Activated naive CD4-positive, alpha-beta T cell treated with anti-CD3 and anti-CD28 coated beads for 36 hours (primary cell): ENCODE measurements at regions of chrX and their contacts with region 1.

Region 1: DNA sequence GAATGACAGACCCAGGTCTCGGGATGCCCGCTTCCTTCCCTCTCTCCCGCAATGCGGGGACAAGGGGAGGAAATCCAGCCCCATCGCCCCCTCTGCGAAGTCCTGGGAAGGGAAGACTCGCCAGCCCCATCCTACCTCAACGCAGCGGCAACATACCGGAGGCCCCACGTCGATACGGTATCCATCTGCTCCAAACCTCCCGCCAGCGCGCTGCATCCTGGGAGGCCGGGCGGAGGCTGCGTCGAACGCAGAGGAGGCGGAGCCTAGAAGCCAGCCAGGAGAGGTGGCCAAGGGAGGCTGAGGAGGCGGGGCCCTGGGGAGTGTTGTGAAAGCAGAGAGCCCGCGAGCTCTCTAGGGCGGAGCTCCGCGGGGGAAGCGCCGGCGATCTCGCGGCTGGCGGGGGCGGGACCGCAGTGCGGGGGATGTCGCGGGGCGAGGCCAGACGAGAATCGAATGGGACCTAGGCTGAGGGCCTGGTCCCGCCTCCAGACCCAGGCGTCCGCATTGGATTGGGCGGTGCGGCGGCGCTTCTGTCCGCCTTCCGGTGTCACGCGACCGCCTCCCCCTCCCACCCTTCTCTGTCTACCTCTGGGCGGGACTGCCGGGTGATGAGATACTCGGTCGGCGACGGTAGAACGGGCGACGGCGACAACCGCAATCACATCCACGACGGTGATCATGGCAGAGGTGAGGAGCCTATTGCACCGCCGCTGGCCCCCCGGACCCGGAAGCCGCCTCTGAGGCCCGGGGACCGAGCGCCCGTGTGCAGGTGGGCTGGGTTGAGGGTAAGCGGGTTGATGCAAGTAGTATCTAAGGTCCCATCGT is at the starts of genes FANCB and MOSPD2:
- DNase-seq: peak; percentile 95
- H3K4me3 Mint-ChIP-seq: peak within 1 kb of the TSS; percentile 77
- H3K27ac Mint-ChIP-seq: peak within 1 kb of the TSS; percentile 75
- H3K4me1 Mint-ChIP-seq: peaks cover 26% of the 10 kb centered on the region
- H3K27me3 Mint-ChIP-seq: no peaks in the 10 kb centered on the region
- total RNA-seq, gene FANCB: 16.5 to 17.9 TPM
- total RNA-seq, gene MOSPD2: 16.0 to 16.1 TPM

Region 2: DNA sequence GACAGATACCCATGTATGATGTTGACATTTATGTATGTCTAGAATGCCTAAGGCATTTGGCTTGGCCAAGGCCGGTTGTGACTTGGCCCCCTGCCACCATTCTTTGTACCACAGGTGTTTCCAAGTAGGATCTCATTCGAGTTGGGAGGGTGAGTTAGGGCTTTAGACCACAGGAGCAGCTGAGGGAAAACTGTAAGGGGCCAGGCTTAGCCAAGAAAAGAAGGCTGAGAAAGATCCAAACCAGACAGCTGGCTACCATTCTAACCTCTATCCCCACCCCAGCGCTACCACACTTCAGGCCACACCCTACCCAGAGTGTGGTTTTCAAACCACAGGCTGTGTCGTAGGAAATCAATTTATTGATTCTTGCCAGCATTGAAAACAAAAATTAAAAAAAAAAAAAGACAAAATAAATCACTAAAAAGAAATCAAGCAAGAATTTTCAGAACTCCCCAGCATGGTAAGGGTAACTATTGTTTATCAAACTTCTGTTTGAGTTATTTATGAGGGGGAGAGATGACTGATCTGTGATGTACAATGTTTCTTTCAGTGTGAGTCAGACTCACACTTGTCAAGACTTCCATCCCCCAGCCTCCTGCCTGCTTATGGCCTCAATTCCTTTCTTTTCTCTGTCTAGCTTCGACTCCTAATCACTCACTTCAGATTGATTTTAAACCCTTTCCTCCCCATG is 1888.3 kb before region 1 on chrX:
- CTCF ChIA-PET with region 1: no interaction called
- intact Hi-C with region 1: loop called (anchors 10 kb)
- DNase-seq: peak; percentile 54
- H3K4me3 Mint-ChIP-seq: peak overlapping the region; percentile 54
- H3K27ac Mint-ChIP-seq: peak overlapping the region; percentile 95
- H3K4me1 Mint-ChIP-seq: peaks cover 77% of the 10 kb centered on the region
- H3K27me3 Mint-ChIP-seq: no peaks in the 10 kb centered on the region

Region 3: DNA sequence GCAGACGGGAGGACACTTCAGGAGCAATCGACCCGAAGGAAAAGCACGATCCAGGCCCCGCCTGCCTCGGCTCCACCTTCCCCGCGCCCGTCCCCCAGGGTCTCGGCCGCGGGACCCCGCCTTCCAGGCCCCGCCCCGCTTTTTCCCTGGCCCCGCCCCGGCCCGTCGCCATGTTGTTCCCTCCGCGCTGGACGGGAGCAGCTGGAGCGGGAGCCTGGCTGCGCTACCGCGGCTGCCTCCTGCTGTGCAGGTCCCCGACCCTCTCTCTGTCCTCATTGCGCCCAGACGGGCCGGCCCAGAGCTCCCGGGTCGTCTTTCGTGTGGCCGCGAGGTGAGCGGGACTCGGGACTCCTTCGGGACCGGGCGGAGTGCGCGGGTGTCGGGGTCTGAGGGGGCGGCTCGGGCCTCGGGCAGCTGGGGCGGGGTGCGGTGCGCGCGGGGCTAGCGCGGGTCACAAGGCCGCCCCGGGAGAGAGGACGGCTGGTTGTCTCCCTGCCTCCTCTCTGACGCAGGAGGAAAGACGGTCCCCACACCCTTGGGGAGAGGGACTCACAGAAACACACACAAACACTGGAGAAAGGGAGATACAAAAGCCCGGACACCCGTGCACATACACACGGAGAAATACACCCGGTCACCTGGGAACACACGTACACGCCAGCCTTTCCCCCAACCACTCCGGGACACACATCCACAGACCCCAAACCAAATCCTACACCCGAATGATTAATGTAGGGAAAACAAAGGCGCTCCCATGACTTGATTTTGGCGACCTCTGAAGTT is 1183.9 kb before region 1 on chrX and contains the start of gene RAB9A:
- CTCF ChIA-PET with region 1: no interaction called
- intact Hi-C with region 1: loop called (anchors 2 kb)
- DNase-seq: peak; percentile 83
- H3K4me3 Mint-ChIP-seq: peak within 1 kb of the TSS; percentile 82
- H3K27ac Mint-ChIP-seq: peak within 1 kb of the TSS; percentile 96
- H3K4me1 Mint-ChIP-seq: peaks cover 65% of the 10 kb centered on the region
- H3K27me3 Mint-ChIP-seq: no peaks in the 10 kb centered on the region
- total RNA-seq, gene RAB9A: 22.8 to 23.3 TPM

Region 4: GRCh38 chrX:14497184-14497666 is 375.8 kb before region 1 on chrX:
- CTCF ChIA-PET with region 1: no interaction called
- intact Hi-C with region 1: loop called (anchors 5 kb)
- DNase-seq: peak; percentile 14
- H3K4me3 Mint-ChIP-seq: peak overlapping the region; percentile 71
- H3K27ac Mint-ChIP-seq: peak overlapping the region; percentile 91
- H3K4me1 Mint-ChIP-seq: peaks cover 16% of the 10 kb centered on the region
- H3K27me3 Mint-ChIP-seq: no peaks in the 10 kb centered on the region

Region 5: DNA sequence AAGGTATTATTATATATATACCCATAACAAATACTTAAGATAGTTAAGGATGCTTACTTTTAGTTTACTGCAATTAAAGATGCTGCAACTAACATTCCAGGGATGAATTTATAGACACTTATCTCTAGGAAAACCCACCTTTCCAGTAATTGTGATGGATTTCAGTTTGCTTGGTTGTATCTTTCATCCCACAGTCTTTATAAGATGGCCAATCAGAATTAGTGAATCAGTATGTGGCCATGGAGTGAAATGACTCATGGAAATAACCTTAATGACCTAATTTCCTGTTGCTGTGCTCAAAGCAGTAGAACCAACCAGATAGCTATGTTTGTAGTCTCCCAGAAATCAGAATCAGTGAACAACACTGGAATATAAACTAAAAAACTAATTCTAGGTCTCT is 26.5 kb after region 1 on chrX:
- CTCF ChIA-PET with region 1: no interaction called
- intact Hi-C with region 1: loop called (anchors 2 kb)
- DNase-seq: no peak
- H3K4me3 Mint-ChIP-seq: no peak overlapping the region
- H3K27ac Mint-ChIP-seq: peak overlapping the region; percentile 77
- H3K4me1 Mint-ChIP-seq: peaks cover 8% of the 10 kb centered on the region
- H3K27me3 Mint-ChIP-seq: no peaks in the 10 kb centered on the region

Region 6: GRCh38 chrX:15674841-15675489 is 801.9 kb after region 1 on chrX:
- CTCF ChIA-PET with region 1: no interaction called
- intact Hi-C with region 1: loop called (anchors 1 kb)
- DNase-seq: peak; percentile 85
- H3K4me3 Mint-ChIP-seq: no peak overlapping the region
- H3K27ac Mint-ChIP-seq: no peak overlapping the region
- H3K4me1 Mint-ChIP-seq: peaks cover 21% of the 10 kb centered on the region
- H3K27me3 Mint-ChIP-seq: no peaks in the 10 kb centered on the region